Right cardiac atrium (tissue), 5 donors: ENCODE measurements at regions of chr20 and their contacts with region 1.

Region 1: DNA sequence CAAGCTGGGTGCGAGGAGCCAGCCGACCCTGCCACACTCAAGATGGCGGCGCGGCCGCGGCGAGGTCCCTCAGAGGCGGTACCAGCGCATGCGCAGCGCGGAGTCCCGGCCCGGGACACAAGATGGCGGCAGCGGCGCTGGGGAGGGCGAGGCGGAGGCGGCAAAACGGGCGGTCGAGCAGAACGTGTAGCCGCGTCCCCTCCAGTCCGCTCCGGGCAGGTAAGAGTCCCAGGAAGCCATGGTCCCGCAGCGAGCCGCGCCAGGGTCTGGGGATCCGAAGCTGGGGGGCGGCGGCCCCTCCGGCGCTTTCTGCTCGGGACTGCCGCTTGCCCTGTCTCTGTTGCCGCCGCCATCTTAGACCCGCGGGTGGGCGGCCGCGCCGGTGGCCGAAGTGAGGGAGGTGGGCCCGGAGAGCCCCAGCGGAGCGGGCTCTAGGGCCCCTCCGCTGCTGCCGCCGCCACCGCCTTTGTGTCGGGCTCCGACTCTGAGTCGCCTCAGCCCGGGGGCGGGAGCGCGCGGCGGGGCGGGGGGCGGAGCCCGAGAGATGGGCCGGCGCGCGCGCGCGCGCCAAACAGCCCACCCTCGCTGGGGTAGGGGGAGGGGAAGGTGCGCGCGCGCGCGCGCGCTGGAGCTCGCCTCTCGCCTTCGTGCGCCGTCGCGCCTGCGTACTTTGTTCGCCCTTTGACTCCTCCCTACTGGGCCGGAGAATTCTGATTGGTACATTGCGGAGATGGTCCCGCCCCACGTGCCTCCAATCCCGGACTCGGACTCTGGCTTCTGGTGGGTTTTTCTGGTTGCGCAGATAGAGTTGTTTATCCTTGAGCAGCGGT is at the start of gene PCIF1:
- DNase-seq: peak; percentile 98 to 100 (median 99)
- ATAC-seq: peak; percentile 92 to 93
- H3K4me3 ChIP-seq: peak within 1 kb of the TSS; percentile 92
- H3K27ac ChIP-seq: peak within 1 kb of the TSS; percentile 98
- H3K4me1 ChIP-seq: peaks cover 6% of the 10 kb centered on the region
- H3K27me3 ChIP-seq: no peaks in the 10 kb centered on the region
- total RNA-seq, gene PCIF1: 28.0 to 31.8 (median 29.6) TPM

Region 2: GRCh38 chr20:45833030-45833882 is 101.5 kb before region 1 on chr20 and contains the start of gene SNX21:
- intact Hi-C with region 1: loop called in 1 of 4 experiments (anchors 10 kb)
- DNase-seq: peak; percentile 94 to 96 (median 96)
- ATAC-seq: peak; percentile 93 to 94
- H3K4me3 ChIP-seq: peak within 1 kb of the TSS; percentile 50
- H3K27ac ChIP-seq: peak within 1 kb of the TSS; percentile 85
- H3K4me1 ChIP-seq: peaks cover 7% of the 10 kb centered on the region
- H3K27me3 ChIP-seq: no peaks in the 10 kb centered on the region
- total RNA-seq, gene SNX21: 25.8 to 30.7 (median 28.7) TPM

Region 3: DNA sequence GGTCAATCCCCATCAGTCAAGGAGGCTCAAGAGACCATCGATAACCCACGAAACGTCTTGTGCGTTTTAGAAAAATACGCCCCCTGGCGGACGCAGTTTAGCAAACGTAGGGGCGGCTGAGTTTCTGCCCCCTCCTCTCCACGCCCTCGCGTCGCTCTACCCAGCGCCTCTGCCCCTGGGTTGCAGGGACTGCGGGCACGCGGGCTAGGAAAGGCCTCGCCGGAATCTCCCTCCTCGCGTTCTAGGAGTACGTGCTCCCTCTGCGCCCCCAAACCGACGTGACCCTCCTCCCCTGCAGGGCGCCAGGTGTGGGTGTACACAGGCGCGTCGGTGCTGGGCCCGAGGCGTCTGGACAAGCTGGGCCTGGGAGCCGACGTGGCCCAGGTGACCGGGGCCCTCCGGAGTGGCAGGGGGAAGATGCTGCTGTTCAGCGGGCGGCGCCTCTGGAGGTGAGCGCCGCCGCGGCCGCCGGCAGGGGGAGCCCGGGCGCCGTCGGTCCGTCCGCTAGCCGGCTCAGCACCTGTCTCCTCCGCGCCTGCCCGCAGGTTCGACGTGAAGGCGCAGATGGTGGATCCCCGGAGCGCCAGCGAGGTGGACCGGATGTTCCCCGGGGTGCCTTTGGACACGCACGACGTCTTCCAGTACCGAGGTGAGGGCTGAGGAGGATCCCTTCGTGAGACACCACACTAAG is 79.2 kb after region 1 on chr20:
- intact Hi-C with region 1: no loop called
- DNase-seq: peak in 2 of 3 donors; percentile 67 to 74
- ATAC-seq: peak; percentile 64 to 73
- H3K4me3 ChIP-seq: no peak overlapping the region
- H3K27ac ChIP-seq: no peak overlapping the region
- H3K4me1 ChIP-seq: no peaks in the 10 kb centered on the region
- H3K27me3 ChIP-seq: no peaks in the 10 kb centered on the region